IMR-90 (cell line): ENCODE measurements at regions of chr15 and their contacts with region 1.

Region 1: GRCh38 chr15:65730549-65731172 is 61.4 kb downstream of the DENND4A start:
- DNase-seq: peak; percentile 2
- ATAC-seq: no peak
- H3K4me3 ChIP-seq: no peak overlapping the region
- H3K27ac ChIP-seq: no peak overlapping the region
- H3K4me1 ChIP-seq: peaks cover 6% of the 10 kb centered on the region; the same call in 1 of the 2 replicates
- H3K27me3 ChIP-seq: no peaks in the 10 kb centered on the region
- CTCF ChIP-seq: no peak
- POLR2A ChIP-seq: no peak
- RAD21 ChIP-seq: no peak

Region 2: GRCh38 chr15:65655026-65655425 is 75.6 kb before region 1 on chr15:
- CTCF ChIA-PET with region 1: no interaction called
- POLR2A ChIA-PET with region 1: no interaction called
- dilution Hi-C with region 1: no loop called
- in situ Hi-C with region 1: no loop called
- intact Hi-C with region 1: no loop called
- DNase-seq: peak; percentile 13
- ATAC-seq: peak; percentile 25; the same call in 1 of the 2 replicates
- H3K4me3 ChIP-seq: no peak overlapping the region
- H3K27ac ChIP-seq: no peak overlapping the region
- H3K4me1 ChIP-seq: peaks cover 17% of the 10 kb centered on the region
- H3K27me3 ChIP-seq: no peaks in the 10 kb centered on the region
- CTCF ChIP-seq: no peak
- POLR2A ChIP-seq: no peak
- RAD21 ChIP-seq: no peak

Region 3: DNA sequence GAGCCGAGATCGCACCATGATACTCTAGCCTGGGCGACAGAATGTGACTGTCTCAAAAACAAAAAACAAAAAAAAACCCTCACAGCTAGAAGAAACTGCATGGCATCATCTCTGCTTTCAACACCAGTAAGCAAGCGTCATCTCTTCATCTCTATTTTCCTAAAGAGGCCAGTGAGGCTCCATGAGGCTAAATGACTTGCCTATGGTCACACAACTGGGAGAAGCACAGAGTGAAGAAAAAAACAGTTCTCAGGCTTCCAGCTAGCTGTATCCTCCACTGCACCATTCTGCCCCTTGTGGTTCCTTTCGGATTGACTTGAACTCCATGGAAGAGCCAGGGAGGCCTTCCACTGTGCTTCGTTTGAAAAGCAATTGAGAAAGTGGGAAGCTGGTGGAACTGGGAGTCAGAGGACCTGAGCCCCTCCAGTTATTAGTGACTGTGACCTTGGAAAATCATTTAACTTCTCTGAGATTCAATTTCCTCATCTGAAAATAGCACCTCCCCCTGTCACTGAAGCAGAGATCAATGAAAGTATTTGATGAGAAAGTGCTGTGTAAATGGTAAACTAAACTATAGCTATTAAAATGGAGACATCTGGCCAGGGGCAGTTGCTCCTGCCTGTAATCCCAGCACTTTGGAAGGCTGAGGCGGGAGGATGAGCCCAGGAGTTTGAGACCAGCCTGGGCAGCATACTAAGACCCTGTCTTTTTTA is 93.5 kb after region 1 on chr15:
- CTCF ChIA-PET with region 1: no interaction called
- POLR2A ChIA-PET with region 1: no interaction called
- dilution Hi-C with region 1: no loop called
- in situ Hi-C with region 1: no loop called
- intact Hi-C with region 1: no loop called
- DNase-seq: peak; percentile 70
- ATAC-seq: peak; percentile 91
- H3K4me3 ChIP-seq: no peak overlapping the region
- H3K27ac ChIP-seq: no peak overlapping the region
- H3K4me1 ChIP-seq: 0 out of 2 replicates have a peak, but pooled peaks cover 1% of the 10 kb centered on the region
- H3K27me3 ChIP-seq: no peaks in the 10 kb centered on the region
- CTCF ChIP-seq: peak; percentile 68
- POLR2A ChIP-seq: no peak
- RAD21 ChIP-seq: peak; percentile 66

Region 4: GRCh38 chr15:65869127-65869953 is 138.7 kb after region 1 on chr15 and contains the start of gene RAB11A:
- CTCF ChIA-PET with region 1: no interaction called
- POLR2A ChIA-PET with region 1: no interaction called
- dilution Hi-C with region 1: no loop called
- in situ Hi-C with region 1: no loop called
- intact Hi-C with region 1: loop called (anchors 5 kb)
- DNase-seq: peak; percentile 96
- ATAC-seq: peak; percentile 92
- H3K4me3 ChIP-seq: peak within 1 kb of the TSS; percentile 58
- H3K27ac ChIP-seq: peak within 1 kb of the TSS; percentile 91
- H3K4me1 ChIP-seq: no peaks in the 10 kb centered on the region
- H3K27me3 ChIP-seq: no peaks in the 10 kb centered on the region
- CTCF ChIP-seq: peak; percentile 40
- POLR2A ChIP-seq: peak; percentile 99
- RAD21 ChIP-seq: no peak; the same call in 1 of the 2 replicates
- total RNA-seq, gene RAB11A: 376 and 462 TPM in 2 replicates